ENCODE measurements at regions of chr1 and their contacts with region 1.

Region 1: DNA sequence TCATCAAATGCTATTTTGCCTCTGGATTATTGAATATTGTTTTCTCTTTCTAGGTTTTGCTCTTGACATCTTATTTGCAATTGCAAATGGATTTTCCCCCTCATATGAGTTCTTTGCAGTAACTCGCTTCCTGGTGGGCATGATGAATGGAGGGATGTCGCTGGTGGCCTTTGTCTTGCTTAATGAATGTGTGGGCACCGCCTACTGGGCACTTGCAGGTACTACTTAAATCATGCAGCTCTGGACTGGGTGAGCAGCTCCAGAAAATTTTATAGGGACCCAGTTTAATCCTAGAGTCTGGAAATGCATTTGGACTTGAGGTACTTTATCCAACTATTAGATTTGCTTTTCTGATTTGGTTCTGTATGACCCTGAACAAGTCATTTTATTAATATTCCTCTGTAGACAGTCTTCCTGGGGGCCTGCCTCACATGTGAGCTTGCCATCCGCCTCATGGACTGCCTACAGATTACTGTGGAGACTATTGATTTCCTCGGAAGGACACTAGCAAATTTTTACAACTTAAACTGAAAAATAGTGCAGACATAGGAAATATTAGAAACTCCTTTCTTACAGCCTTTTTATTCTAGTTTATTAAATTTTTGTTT is 44.5 kb downstream of the SLC22A15 start:
- DNase-seq: peak; percentile 68
- ATAC-seq: peak; percentile 68
- H3K4me3 Mint-ChIP-seq: no peak overlapping the region
- H3K27ac Mint-ChIP-seq: no peak overlapping the region
- H3K4me1 Mint-ChIP-seq: no peaks in the 10 kb centered on the region
- H3K27me3 Mint-ChIP-seq: no peaks in the 10 kb centered on the region

Region 2: GRCh38 chr1:116033322-116033721 is 12.6 kb after region 1 on chr1:
- CTCF ChIA-PET with region 1: interaction called, 12 read pairs
- POLR2A ChIA-PET with region 1: no interaction called
- intact Hi-C with region 1: no loop called
- DNase-seq: no peak
- ATAC-seq: no peak
- H3K4me3 Mint-ChIP-seq: no peak overlapping the region
- H3K27ac Mint-ChIP-seq: no peak overlapping the region
- H3K4me1 Mint-ChIP-seq: no peaks in the 10 kb centered on the region
- H3K27me3 Mint-ChIP-seq: peaks cover 2% of the 10 kb centered on the region

Region 3: DNA sequence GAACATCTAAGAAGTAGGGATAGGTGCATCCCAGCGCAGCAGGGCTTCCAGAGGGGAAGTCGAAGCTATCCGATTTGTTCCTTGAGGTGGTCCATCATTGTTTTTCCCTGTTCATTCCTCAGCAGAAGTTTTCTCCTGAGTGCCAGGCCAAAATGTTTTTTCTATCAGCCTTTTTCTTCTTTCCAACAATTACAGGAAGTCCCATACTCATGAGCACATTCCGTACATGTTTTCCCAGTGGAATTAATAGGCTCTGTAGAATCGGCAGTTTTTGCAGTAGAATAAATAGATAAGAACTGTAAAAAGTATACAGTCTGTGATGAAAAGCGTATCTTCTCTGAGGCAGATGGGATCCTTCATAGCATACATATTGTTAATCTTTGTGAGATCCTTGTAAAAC is 1005.6 kb after region 1 on chr1:
- CTCF ChIA-PET with region 1: no interaction called
- POLR2A ChIA-PET with region 1: no interaction called
- intact Hi-C with region 1: no loop called
- DNase-seq: no peak
- ATAC-seq: no peak
- H3K4me3 Mint-ChIP-seq: no peak overlapping the region
- H3K27ac Mint-ChIP-seq: no peak overlapping the region
- H3K4me1 Mint-ChIP-seq: peaks cover 11% of the 10 kb centered on the region
- H3K27me3 Mint-ChIP-seq: no peaks in the 10 kb centered on the region

Measured in activated CD4-positive, alpha-beta T cell treated with anti-CD3 and anti-CD28 coated beads for 36 hours (primary cell).